CD4-positive, alpha-beta T cell (primary cell): ENCODE measurements at regions of chr16 and their contacts with region 1.

Region 1: GRCh38 chr16:79601931-79602627 is 1.5 kb upstream of the MAF start:
- DNase-seq: peak; percentile 71 to 92 (median 82)
- ATAC-seq: peak; percentile 6
- H3K4me3 ChIP-seq: peak overlapping the region; percentile 72
- H3K4me3 Mint-ChIP-seq: peak overlapping the region; percentile 98
- H3K27ac ChIP-seq: peak overlapping the region; percentile 27 to 32
- H3K27ac Mint-ChIP-seq: peak overlapping the region; percentile 93
- H3K4me1 ChIP-seq: peaks cover 20% of the 10 kb centered on the region
- H3K4me1 Mint-ChIP-seq: peaks cover 32% of the 10 kb centered on the region
- H3K27me3 ChIP-seq: no peaks in the 10 kb centered on the region
- H3K27me3 Mint-ChIP-seq: peaks cover 11% of the 10 kb centered on the region
- CTCF ChIP-seq: peak; percentile 91

Region 2: GRCh38 chr16:78503602-78504001 is 1098.5 kb before region 1 on chr16:
- CTCF ChIA-PET with region 1: no interaction called
- POLR2A ChIA-PET with region 1: interaction called, 3 read pairs
- intact Hi-C with region 1: loop called (anchors 1 kb)
- DNase-seq: peak in 10 of 14 experiments; percentile 4 to 75 (median 30)
- ATAC-seq: no peak
- H3K4me3 ChIP-seq: no peak overlapping the region
- H3K4me3 Mint-ChIP-seq: no peak overlapping the region
- H3K27ac ChIP-seq: no peak overlapping the region
- H3K27ac Mint-ChIP-seq: no peak overlapping the region
- H3K4me1 ChIP-seq: no peaks in the 10 kb centered on the region
- H3K4me1 Mint-ChIP-seq: no peaks in the 10 kb centered on the region
- H3K27me3 ChIP-seq: no peaks in the 10 kb centered on the region
- H3K27me3 Mint-ChIP-seq: no peaks in the 10 kb centered on the region
- CTCF ChIP-seq: peak; percentile 79

Region 3: GRCh38 chr16:78770353-78771091 is 831.6 kb before region 1 on chr16:
- CTCF ChIA-PET with region 1: interaction called, 3 read pairs
- POLR2A ChIA-PET with region 1: no interaction called
- intact Hi-C with region 1: loop called (anchors 10 kb)
- DNase-seq: peak; percentile 63 to 90 (median 80)
- ATAC-seq: peak; percentile 78
- H3K4me3 ChIP-seq: no peak overlapping the region
- H3K4me3 Mint-ChIP-seq: no peak overlapping the region
- H3K27ac ChIP-seq: peak overlapping the region in 1 of 2 donors; percentile 11
- H3K27ac Mint-ChIP-seq: no peak overlapping the region
- H3K4me1 ChIP-seq: peaks cover 30% of the 10 kb centered on the region
- H3K4me1 Mint-ChIP-seq: peaks cover 21% of the 10 kb centered on the region
- H3K27me3 ChIP-seq: no peaks in the 10 kb centered on the region
- H3K27me3 Mint-ChIP-seq: peaks cover 5% of the 10 kb centered on the region
- CTCF ChIP-seq: peak; percentile 82

Region 4: DNA sequence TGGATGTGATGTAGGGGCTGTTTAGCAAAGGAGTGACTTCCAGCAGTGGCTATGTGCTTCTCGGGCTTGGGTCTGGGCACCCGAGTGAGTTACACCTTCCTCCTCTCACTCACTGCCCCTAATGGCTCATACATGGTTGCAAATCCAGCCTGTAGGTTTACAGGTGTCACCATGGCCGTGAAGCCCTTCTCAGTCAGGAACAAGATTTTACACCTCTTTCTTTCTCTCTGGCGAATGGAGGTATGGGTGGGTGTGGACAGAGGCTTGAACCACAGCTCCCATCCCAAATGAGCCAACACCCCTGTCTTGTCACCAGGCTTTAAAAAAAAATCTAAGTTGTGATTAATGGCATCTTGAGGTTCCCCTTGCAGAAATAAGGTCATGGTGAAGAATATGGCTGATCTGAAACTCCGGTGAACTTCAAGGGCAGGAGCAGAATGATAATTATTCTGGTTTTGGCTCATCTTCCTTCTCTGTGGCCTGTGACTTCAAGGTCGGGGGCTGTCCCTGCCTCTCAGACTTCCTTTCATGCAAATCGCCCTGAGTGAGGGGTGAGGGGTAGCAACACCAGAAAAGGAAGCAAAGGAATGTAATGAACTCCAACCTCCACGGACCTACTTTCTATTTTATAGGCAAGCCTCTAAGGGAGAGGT is 332.7 kb before region 1 on chr16:
- CTCF ChIA-PET with region 1: no interaction called
- POLR2A ChIA-PET with region 1: interaction called, 10 read pairs
- intact Hi-C with region 1: no loop called
- DNase-seq: peak in 7 of 14 experiments; percentile 10 to 71 (median 47)
- ATAC-seq: peak; percentile 18
- H3K4me3 ChIP-seq: peak overlapping the region; percentile 13
- H3K4me3 Mint-ChIP-seq: peak overlapping the region; percentile 62
- H3K27ac ChIP-seq: peak overlapping the region in 1 of 2 donors; percentile 21
- H3K27ac Mint-ChIP-seq: peak overlapping the region; percentile 35
- H3K4me1 ChIP-seq: peaks cover 69% of the 10 kb centered on the region
- H3K4me1 Mint-ChIP-seq: peaks cover 72% of the 10 kb centered on the region
- H3K27me3 ChIP-seq: no peaks in the 10 kb centered on the region
- H3K27me3 Mint-ChIP-seq: peaks cover 43% of the 10 kb centered on the region
- CTCF ChIP-seq: no peak

Region 5: GRCh38 chr16:79589601-79590102 is 12.4 kb before region 1 on chr16:
- CTCF ChIA-PET with region 1: interaction called, 3 read pairs
- POLR2A ChIA-PET with region 1: interaction called, 19 read pairs
- intact Hi-C with region 1: no loop called
- DNase-seq: peak in 1 of 14 experiments; percentile 27
- ATAC-seq: peak; percentile 46
- H3K4me3 ChIP-seq: peak overlapping the region; percentile 38
- H3K4me3 Mint-ChIP-seq: peak overlapping the region; percentile 68
- H3K27ac ChIP-seq: no peak overlapping the region
- H3K27ac Mint-ChIP-seq: peak overlapping the region; percentile 35
- H3K4me1 ChIP-seq: peaks cover 16% of the 10 kb centered on the region
- H3K4me1 Mint-ChIP-seq: peaks cover 36% of the 10 kb centered on the region
- H3K27me3 ChIP-seq: peaks cover 3 to 11% of the 10 kb centered on the region in 2 experiments
- H3K27me3 Mint-ChIP-seq: peaks cover 15% of the 10 kb centered on the region
- CTCF ChIP-seq: no peak

Region 6: GRCh38 chr16:79897453-79898146 is 295.5 kb after region 1 on chr16:
- CTCF ChIA-PET with region 1: no interaction called
- POLR2A ChIA-PET with region 1: no interaction called
- intact Hi-C with region 1: no loop called
- DNase-seq: no peak
- ATAC-seq: no peak
- H3K4me3 ChIP-seq: no peak overlapping the region
- H3K4me3 Mint-ChIP-seq: no peak overlapping the region
- H3K27ac ChIP-seq: no peak overlapping the region
- H3K27ac Mint-ChIP-seq: no peak overlapping the region
- H3K4me1 ChIP-seq: no peaks in the 10 kb centered on the region
- H3K4me1 Mint-ChIP-seq: no peaks in the 10 kb centered on the region
- H3K27me3 ChIP-seq: no peaks in the 10 kb centered on the region
- H3K27me3 Mint-ChIP-seq: no peaks in the 10 kb centered on the region
- CTCF ChIP-seq: no peak